Activated CD4-positive, alpha-beta memory T cell treated with anti-CD3 and anti-CD28 coated beads for 36 hours (primary cell): ENCODE measurements at regions of chr3 and their contacts with region 1.

Region 1: DNA sequence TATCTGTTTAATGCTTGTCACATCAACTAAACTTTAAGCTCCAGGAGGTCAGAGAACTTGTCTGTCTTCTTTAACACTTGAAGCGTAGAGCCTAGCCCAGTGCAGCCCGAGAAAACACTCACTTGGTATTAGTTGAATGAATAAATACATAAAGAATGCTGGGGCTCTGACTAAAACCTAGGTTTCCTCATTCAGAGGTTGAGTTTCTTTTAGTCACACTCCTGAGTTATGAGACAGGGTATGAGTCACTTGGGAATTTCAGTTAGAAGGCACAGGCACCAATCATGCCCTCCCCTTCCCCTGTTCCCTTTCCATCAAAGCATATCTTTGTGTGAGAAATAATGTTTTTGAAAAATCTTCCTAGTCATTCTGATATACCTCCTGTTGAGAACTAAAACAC is 589.8 kb upstream of the DPPA4 start:
- DNase-seq: peak; percentile 34
- H3K4me3 Mint-ChIP-seq: no peak overlapping the region
- H3K27ac Mint-ChIP-seq: no peak overlapping the region
- H3K4me1 Mint-ChIP-seq: peaks cover 5% of the 10 kb centered on the region
- H3K27me3 Mint-ChIP-seq: no peaks in the 10 kb centered on the region

Region 2: DNA sequence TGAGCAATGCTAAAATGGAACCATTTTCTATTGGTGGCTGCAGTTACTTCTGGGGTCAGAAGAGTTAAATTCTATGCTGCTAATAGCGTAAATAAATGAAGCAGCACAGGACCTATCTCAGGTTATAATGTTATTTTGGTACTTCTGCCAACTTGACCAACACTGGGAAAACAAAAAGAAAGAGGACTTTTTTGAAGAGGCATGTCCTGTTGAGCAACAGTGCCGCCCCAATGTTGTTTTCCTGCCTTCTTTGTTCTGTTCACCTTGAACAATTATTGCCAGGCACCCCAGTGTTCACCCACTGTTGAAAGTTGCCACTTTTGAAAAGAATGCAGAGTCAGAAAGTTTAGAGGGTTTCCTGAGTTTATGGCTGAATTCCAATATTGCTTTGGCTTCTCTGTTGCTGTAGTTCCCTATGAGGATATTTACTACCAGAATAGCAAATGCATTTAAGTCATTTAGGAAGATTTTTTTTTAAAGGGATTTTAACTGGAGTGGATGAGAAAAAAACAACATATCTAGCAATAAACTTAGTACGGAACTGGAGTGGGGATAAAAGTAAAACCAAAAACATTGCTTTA is 89.2 kb after region 1 on chr3:
- CTCF ChIA-PET with region 1: no interaction called
- POLR2A ChIA-PET with region 1: no interaction called
- intact Hi-C with region 1: loop called (anchors 10 kb)
- DNase-seq: no peak
- H3K4me3 Mint-ChIP-seq: no peak overlapping the region
- H3K27ac Mint-ChIP-seq: no peak overlapping the region
- H3K4me1 Mint-ChIP-seq: peaks cover 10% of the 10 kb centered on the region
- H3K27me3 Mint-ChIP-seq: no peaks in the 10 kb centered on the region